Activated naive CD4-positive, alpha-beta T cell treated with anti-CD3 and anti-CD28 coated beads, Interleukin-2, amount 10 ng/mL, durations not matched to agents 7 days and 5 days (primary cell): ENCODE measurements at regions of chr2 and their contacts with region 1.

Region 1: GRCh38 chr2:177296040-177296439 is 31.5 kb upstream of the NFE2L2 start:
- DNase-seq: no peak
- H3K4me3 Mint-ChIP-seq: no peak overlapping the region
- H3K27ac Mint-ChIP-seq: no peak overlapping the region
- H3K4me1 Mint-ChIP-seq: peaks cover 49% of the 10 kb centered on the region
- H3K27me3 Mint-ChIP-seq: no peaks in the 10 kb centered on the region

Region 2: GRCh38 chr2:177124371-177124770 is 171.7 kb before region 1 on chr2:
- CTCF ChIA-PET with region 1: no interaction called
- DNase-seq: no peak
- H3K4me3 Mint-ChIP-seq: no peak overlapping the region
- H3K27ac Mint-ChIP-seq: no peak overlapping the region
- H3K4me1 Mint-ChIP-seq: no peaks in the 10 kb centered on the region
- H3K27me3 Mint-ChIP-seq: peaks cover 13% of the 10 kb centered on the region

Region 3: DNA sequence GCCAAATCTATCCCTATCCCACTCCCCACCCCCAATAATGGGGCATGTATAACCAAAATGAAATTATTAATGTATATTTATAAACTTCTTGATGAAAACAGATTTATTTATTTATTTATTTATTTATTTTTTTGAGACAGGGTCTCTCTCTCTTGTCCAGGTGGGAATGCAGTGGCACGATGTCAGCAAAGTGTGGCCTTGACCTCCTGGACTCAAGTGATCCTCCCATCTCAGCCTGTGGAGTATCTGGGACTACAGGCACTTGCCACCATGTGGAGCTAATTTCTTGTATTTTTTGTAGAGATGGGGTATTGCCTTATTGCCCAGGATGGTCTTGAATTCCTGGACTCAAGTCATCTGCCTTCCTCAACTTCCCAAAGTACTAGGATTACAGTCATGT is 111.4 kb before region 1 on chr2:
- CTCF ChIA-PET with region 1: no interaction called
- DNase-seq: no peak
- H3K4me3 Mint-ChIP-seq: no peak overlapping the region
- H3K27ac Mint-ChIP-seq: no peak overlapping the region
- H3K4me1 Mint-ChIP-seq: no peaks in the 10 kb centered on the region
- H3K27me3 Mint-ChIP-seq: peaks cover 39% of the 10 kb centered on the region

Region 4: GRCh38 chr2:177263451-177264208 is 32.4 kb before region 1 on chr2:
- CTCF ChIA-PET with region 1: interaction called, 120 read pairs
- DNase-seq: peak; percentile 96
- H3K4me3 Mint-ChIP-seq: peak overlapping the region; percentile 98
- H3K27ac Mint-ChIP-seq: peak overlapping the region; percentile 100
- H3K4me1 Mint-ChIP-seq: peaks cover 62% of the 10 kb centered on the region
- H3K27me3 Mint-ChIP-seq: peaks cover 3% of the 10 kb centered on the region

Region 5: GRCh38 chr2:177273408-177273807 is 22.6 kb before region 1 on chr2:
- CTCF ChIA-PET with region 1: interaction called, 120 read pairs
- DNase-seq: no peak
- H3K4me3 Mint-ChIP-seq: no peak overlapping the region
- H3K27ac Mint-ChIP-seq: no peak overlapping the region
- H3K4me1 Mint-ChIP-seq: peaks cover 24% of the 10 kb centered on the region
- H3K27me3 Mint-ChIP-seq: no peaks in the 10 kb centered on the region

Region 6: GRCh38 chr2:177281400-177282180 is 14.4 kb before region 1 on chr2:
- CTCF ChIA-PET with region 1: interaction called, 15 read pairs
- DNase-seq: no peak
- H3K4me3 Mint-ChIP-seq: no peak overlapping the region
- H3K27ac Mint-ChIP-seq: no peak overlapping the region
- H3K4me1 Mint-ChIP-seq: peaks cover 20% of the 10 kb centered on the region
- H3K27me3 Mint-ChIP-seq: no peaks in the 10 kb centered on the region

Region 7: DNA sequence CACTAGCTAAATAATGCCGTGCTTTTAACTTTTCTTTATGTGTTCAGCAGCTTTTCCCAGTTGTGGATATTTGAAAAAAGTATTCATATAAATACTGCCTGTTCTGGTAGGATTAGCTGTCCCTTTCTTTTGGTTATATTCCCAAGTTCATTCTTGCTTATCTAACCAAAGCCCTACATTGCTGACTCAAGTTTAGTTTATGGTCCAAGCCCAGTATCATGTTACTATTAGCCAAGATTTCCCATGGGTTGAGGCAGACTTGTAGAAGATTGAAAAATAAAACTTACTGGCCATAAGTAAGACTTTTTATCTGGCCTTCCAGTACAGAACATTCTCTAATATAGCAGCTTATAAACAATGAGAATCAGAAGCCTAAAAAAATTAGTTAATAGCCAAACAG is 18.2 kb after region 1 on chr2:
- CTCF ChIA-PET with region 1: interaction called, 11 read pairs
- DNase-seq: no peak
- H3K4me3 Mint-ChIP-seq: no peak overlapping the region
- H3K27ac Mint-ChIP-seq: no peak overlapping the region
- H3K4me1 Mint-ChIP-seq: peaks cover 18% of the 10 kb centered on the region
- H3K27me3 Mint-ChIP-seq: peaks cover 5% of the 10 kb centered on the region

Region 8: GRCh38 chr2:177543007-177543760 is 247.1 kb after region 1 on chr2:
- CTCF ChIA-PET with region 1: no interaction called
- DNase-seq: no peak
- H3K4me3 Mint-ChIP-seq: no peak overlapping the region
- H3K27ac Mint-ChIP-seq: no peak overlapping the region
- H3K4me1 Mint-ChIP-seq: peaks cover 8% of the 10 kb centered on the region
- H3K27me3 Mint-ChIP-seq: no peaks in the 10 kb centered on the region